ENCODE measurements at regions of chr2 and their contacts with region 1.

Region 1: DNA sequence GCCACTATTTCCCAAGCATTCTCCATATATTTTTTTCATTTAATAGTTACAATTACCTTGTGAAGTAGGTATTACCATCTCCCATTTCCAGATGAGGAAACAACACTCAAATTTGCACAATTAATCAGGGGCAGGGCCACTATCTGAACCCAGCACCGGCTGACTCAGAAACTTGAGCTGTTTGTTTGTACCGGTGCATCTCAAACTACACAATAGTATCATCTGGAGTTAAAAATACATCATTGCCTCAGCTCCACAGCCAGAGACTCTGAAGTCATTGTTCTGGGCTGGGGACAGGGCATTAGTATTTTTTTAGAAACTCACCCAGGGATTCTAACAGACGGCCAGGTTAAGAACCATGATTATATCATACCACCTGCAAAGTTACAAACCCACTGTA is 55.9 kb downstream of the CDCA7 start:
- DNase-seq: no peak
- H3K4me3 ChIP-seq: no peak overlapping the region
- H3K4me3 Mint-ChIP-seq: no peak overlapping the region
- H3K27ac ChIP-seq: no peak overlapping the region
- H3K27ac Mint-ChIP-seq: no peak overlapping the region
- H3K4me1 ChIP-seq: no peaks in the 10 kb centered on the region
- H3K4me1 Mint-ChIP-seq: no peaks in the 10 kb centered on the region
- H3K27me3 ChIP-seq: no peaks in the 10 kb centered on the region
- H3K27me3 Mint-ChIP-seq: peaks cover 17 to 18% of the 10 kb centered on the region in 2 donors

Region 2: GRCh38 chr2:173271825-173272224 is 138.8 kb before region 1 on chr2:
- CTCF ChIA-PET with region 1: no interaction called
- POLR2A ChIA-PET with region 1: no interaction called
- intact Hi-C with region 1: no loop called
- DNase-seq: no peak
- H3K4me3 ChIP-seq: no peak overlapping the region
- H3K4me3 Mint-ChIP-seq: no peak overlapping the region
- H3K27ac ChIP-seq: no peak overlapping the region
- H3K27ac Mint-ChIP-seq: no peak overlapping the region
- H3K4me1 ChIP-seq: no peaks in the 10 kb centered on the region
- H3K4me1 Mint-ChIP-seq: no peaks in the 10 kb centered on the region
- H3K27me3 ChIP-seq: no peaks in the 10 kb centered on the region
- H3K27me3 Mint-ChIP-seq: peaks cover 0 to 2% of the 10 kb centered on the region in 2 donors

Region 3: GRCh38 chr2:173448938-173449471 is 38.4 kb after region 1 on chr2:
- CTCF ChIA-PET with region 1: interaction called, 14 read pairs
- POLR2A ChIA-PET with region 1: no interaction called
- intact Hi-C with region 1: no loop called
- DNase-seq: peak; percentile 46 to 63 (median 59)
- H3K4me3 ChIP-seq: no peak overlapping the region
- H3K4me3 Mint-ChIP-seq: peak overlapping the region; percentile 64 to 81 (median 75)
- H3K27ac ChIP-seq: no peak overlapping the region
- H3K27ac Mint-ChIP-seq: peak overlapping the region in 5 of 7 donors; percentile 18 to 81 (median 44)
- H3K4me1 ChIP-seq: peaks cover 8% of the 10 kb centered on the region
- H3K4me1 Mint-ChIP-seq: peaks cover 12 to 19% (median 17%) of the 10 kb centered on the region in 4 donors
- H3K27me3 ChIP-seq: no peaks in the 10 kb centered on the region
- H3K27me3 Mint-ChIP-seq: peaks cover 3 to 4% of the 10 kb centered on the region in 2 donors

Measured in CD4-positive, alpha-beta memory T cell (primary cell).